Right cardiac atrium (tissue), 5 donors: ENCODE measurements at regions of chr1 and their contacts with region 1.

Region 1: GRCh38 chr1:219066631-219067349 is 106.9 kb upstream of the LYPLAL1 start:
- DNase-seq: no peak
- ATAC-seq: peak; percentile 70 to 77
- H3K4me3 ChIP-seq: no peak overlapping the region
- H3K27ac ChIP-seq: no peak overlapping the region
- H3K4me1 ChIP-seq: peaks cover 1% of the 10 kb centered on the region
- H3K27me3 ChIP-seq: no peaks in the 10 kb centered on the region

Region 2: DNA sequence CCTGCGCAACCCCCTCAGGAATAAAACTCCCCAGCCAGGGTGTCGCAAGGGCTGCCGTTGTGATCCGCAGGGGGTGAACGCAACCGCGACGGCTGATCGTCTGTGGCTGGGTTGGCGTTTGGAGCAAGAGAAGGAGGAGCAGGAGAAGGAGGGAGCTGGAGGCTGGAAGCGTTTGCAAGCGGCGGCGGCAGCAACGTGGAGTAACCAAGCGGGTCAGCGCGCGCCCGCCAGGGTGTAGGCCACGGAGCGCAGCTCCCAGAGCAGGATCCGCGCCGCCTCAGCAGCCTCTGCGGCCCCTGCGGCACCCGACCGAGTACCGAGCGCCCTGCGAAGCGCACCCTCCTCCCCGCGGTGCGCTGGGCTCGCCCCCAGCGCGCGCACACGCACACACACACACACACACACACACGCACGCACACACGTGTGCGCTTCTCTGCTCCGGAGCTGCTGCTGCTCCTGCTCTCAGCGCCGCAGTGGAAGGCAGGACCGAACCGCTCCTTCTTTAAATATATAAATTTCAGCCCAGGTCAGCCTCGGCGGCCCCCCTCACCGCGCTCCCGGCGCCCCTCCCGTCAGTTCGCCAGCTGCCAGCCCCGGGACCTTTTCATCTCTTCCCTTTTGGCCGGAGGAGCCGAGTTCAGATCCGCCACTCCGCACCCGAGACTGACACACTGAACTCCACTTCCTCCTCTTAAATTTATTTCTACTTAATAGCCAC is 721.0 kb before region 1 on chr1:
- intact Hi-C with region 1: loop called in 3 of 4 experiments (anchors 5 to 10 kb)
- DNase-seq: peak; percentile 78 to 91 (median 87)
- ATAC-seq: peak; percentile 88 to 89
- H3K4me3 ChIP-seq: peak overlapping the region; percentile 74
- H3K27ac ChIP-seq: peak overlapping the region; percentile 28
- H3K4me1 ChIP-seq: no peaks in the 10 kb centered on the region
- H3K27me3 ChIP-seq: no peaks in the 10 kb centered on the region